B cell (primary cell): ENCODE measurements at regions of chr19 and their contacts with region 1.

Region 1: GRCh38 chr19:53467485-53468262 is at the start of gene ZNF813:
- DNase-seq: peak; percentile 95
- ATAC-seq: peak; percentile 98
- H3K4me3 ChIP-seq: peak within 1 kb of the TSS; percentile 63 to 79 (median 73)
- H3K4me3 Mint-ChIP-seq: peak within 1 kb of the TSS; percentile 97
- H3K27ac ChIP-seq: peak within 1 kb of the TSS; percentile 35 to 80
- H3K27ac Mint-ChIP-seq: peak within 1 kb of the TSS; percentile 91
- H3K4me1 ChIP-seq: peaks cover 6 to 15% of the 10 kb centered on the region in 2 donors
- H3K4me1 Mint-ChIP-seq: peaks cover 32% of the 10 kb centered on the region
- H3K27me3 ChIP-seq: peaks cover 0 to 25% (median 5%) of the 10 kb centered on the region in 4 experiments
- H3K27me3 Mint-ChIP-seq: peaks cover 18% of the 10 kb centered on the region
- CTCF ChIP-seq: no peak
- total RNA-seq, gene ZNF813: 7.8 and 10.8 TPM in 2 replicates

Region 2: DNA sequence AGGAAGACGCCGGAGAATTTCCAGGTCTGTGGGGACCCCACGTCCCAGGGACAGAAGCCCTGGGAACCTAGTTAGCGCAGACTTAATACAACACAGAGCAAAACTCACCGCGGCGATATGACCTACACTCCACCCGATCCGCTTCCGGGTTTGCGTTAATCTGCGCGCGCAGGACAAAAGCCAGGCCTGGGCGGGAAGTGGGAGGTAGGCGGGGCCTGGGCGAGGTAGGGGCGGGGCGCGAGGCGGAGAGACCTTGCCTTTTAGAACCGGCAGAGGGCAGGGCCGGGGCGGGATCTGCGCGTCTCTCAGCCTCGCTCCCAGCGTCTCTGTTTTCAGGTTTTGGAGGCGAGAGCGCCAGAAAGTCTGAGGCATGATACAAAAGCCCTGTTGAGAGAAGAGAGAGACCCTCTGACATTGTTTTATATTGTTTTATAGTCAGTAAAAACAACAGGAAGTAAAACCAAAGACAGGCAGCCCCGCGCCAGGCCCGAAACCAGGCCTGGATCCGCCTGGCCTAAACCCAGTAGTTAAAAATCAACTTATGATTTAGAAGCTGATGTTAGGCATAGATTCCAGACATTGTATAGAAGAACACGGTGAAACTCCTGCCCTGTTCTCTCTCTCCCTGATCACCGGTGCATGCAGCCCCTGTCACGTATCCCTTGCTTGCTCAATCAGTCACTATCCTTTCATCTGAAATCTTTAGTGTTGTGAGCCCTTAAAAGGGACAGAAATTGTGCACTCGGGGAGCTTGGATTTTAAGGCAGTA is 732.6 kb before region 1 on chr19 and contains the start of gene ZNF611:
- CTCF ChIA-PET with region 1: no interaction called
- POLR2A ChIA-PET with region 1: no interaction called
- intact Hi-C with region 1: loop called (anchors 2 kb)
- DNase-seq: peak; percentile 98
- ATAC-seq: peak; percentile 98
- H3K4me3 ChIP-seq: peak within 1 kb of the TSS; percentile 67 to 96 (median 90)
- H3K4me3 Mint-ChIP-seq: peak within 1 kb of the TSS; percentile 93
- H3K27ac ChIP-seq: peak within 1 kb of the TSS; percentile 74 to 91
- H3K27ac Mint-ChIP-seq: peak within 1 kb of the TSS; percentile 92
- H3K4me1 ChIP-seq: peaks cover 10 to 19% of the 10 kb centered on the region in 2 donors
- H3K4me1 Mint-ChIP-seq: peaks cover 23% of the 10 kb centered on the region
- H3K27me3 ChIP-seq: no peaks in the 10 kb centered on the region
- H3K27me3 Mint-ChIP-seq: no peaks in the 10 kb centered on the region
- CTCF ChIP-seq: peak; percentile 79
- total RNA-seq, gene ZNF611: 51.5 and 57.9 TPM in 2 replicates

Region 3: DNA sequence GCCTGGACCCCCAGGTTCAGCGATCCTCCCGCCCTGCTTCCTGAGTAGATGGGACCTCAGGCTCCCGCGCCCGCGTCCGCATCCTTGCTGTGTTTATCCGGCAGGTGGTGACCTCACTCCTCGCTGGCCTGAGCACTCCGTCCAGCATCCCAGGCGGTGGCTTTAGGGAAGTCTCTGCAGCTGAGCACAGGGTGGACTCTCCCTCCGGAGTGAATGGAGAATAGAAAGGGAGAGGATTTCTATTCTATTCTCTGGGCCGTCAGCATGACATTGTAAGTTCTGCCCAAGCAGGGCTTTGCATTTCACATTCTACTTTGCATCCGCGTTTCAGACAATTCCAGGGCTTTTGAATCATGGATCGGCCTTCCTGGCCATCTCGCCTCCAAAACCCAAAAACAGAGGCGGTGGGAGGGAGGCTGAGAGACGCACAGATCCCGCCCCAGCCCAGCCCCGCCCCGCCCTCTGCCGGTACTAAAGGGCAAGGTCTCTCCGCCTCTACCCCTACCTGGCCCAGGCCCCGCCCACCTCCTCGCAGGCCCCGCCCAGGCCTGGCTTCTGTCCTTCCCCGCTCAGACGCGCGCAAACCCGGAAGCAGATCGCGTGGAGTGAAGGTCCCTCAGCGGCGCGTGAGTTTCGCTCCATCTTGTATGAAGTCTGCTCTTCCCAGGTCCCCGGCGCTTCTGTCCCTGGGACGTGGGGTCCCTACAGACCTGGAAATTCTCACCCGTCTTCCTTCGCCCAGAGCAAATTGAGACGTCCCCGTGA is 102.4 kb before region 1 on chr19 and contains the start of gene ZNF525:
- CTCF ChIA-PET with region 1: no interaction called
- POLR2A ChIA-PET with region 1: no interaction called
- intact Hi-C with region 1: loop called (anchors 1 kb)
- DNase-seq: peak; percentile 97
- ATAC-seq: peak; percentile 100
- H3K4me3 ChIP-seq: peak within 1 kb of the TSS; percentile 79 to 99 (median 90)
- H3K4me3 Mint-ChIP-seq: peak within 1 kb of the TSS; percentile 93
- H3K27ac ChIP-seq: peak within 1 kb of the TSS; percentile 66 to 91
- H3K27ac Mint-ChIP-seq: peak within 1 kb of the TSS; percentile 94
- H3K4me1 ChIP-seq: peaks cover 9 to 11% of the 10 kb centered on the region in 2 donors
- H3K4me1 Mint-ChIP-seq: peaks cover 25% of the 10 kb centered on the region
- H3K27me3 ChIP-seq: no peaks in the 10 kb centered on the region
- H3K27me3 Mint-ChIP-seq: no peaks in the 10 kb centered on the region
- CTCF ChIP-seq: peak; percentile 63
- total RNA-seq, gene ZNF525: 33.8 and 34.3 TPM in 2 replicates

Region 4: GRCh38 chr19:53431399-53432087 is 36.1 kb before region 1 on chr19 and contains the start of gene ZNF761:
- CTCF ChIA-PET with region 1: no interaction called
- POLR2A ChIA-PET with region 1: no interaction called
- intact Hi-C with region 1: loop called (anchors 1 kb)
- DNase-seq: peak; percentile 97
- ATAC-seq: peak; percentile 98
- H3K4me3 ChIP-seq: peak within 1 kb of the TSS; percentile 60 to 83 (median 79)
- H3K4me3 Mint-ChIP-seq: peak within 1 kb of the TSS; percentile 95
- H3K27ac ChIP-seq: peak within 1 kb of the TSS; percentile 61 to 82
- H3K27ac Mint-ChIP-seq: peak within 1 kb of the TSS; percentile 89
- H3K4me1 ChIP-seq: peaks cover 10 to 13% of the 10 kb centered on the region in 2 donors
- H3K4me1 Mint-ChIP-seq: peaks cover 34% of the 10 kb centered on the region
- H3K27me3 ChIP-seq: no peaks in the 10 kb centered on the region
- H3K27me3 Mint-ChIP-seq: no peaks in the 10 kb centered on the region
- CTCF ChIP-seq: peak; percentile 39
- total RNA-seq, gene ZNF761: 14.9 and 18.9 TPM in 2 replicates

Region 5: GRCh38 chr19:53537480-53538383 is 70.1 kb after region 1 on chr19 and contains the start of gene ZNF331:
- CTCF ChIA-PET with region 1: no interaction called
- POLR2A ChIA-PET with region 1: no interaction called
- intact Hi-C with region 1: loop called (anchors 5 kb)
- DNase-seq: peak; percentile 96
- ATAC-seq: peak; percentile 76
- H3K4me3 ChIP-seq: peak within 1 kb of the TSS in 4 of 5 experiments; percentile 60 to 73 (median 68)
- H3K4me3 Mint-ChIP-seq: peak within 1 kb of the TSS; percentile 98
- H3K27ac ChIP-seq: peak within 1 kb of the TSS; percentile 92 to 97
- H3K27ac Mint-ChIP-seq: peak within 1 kb of the TSS; percentile 99
- H3K4me1 ChIP-seq: peaks cover 0 to 15% of the 10 kb centered on the region in 2 donors
- H3K4me1 Mint-ChIP-seq: peaks cover 25% of the 10 kb centered on the region
- H3K27me3 ChIP-seq: no peaks in the 10 kb centered on the region
- H3K27me3 Mint-ChIP-seq: no peaks in the 10 kb centered on the region
- CTCF ChIP-seq: no peak
- total RNA-seq, gene ZNF331: 60.1 and 68.2 TPM in 2 replicates